Activated B cell treated with CpG ODN at 0.5 μM for 24 hours (primary cell): ENCODE measurements at regions of chr3 and their contacts with region 1.

Region 1: DNA sequence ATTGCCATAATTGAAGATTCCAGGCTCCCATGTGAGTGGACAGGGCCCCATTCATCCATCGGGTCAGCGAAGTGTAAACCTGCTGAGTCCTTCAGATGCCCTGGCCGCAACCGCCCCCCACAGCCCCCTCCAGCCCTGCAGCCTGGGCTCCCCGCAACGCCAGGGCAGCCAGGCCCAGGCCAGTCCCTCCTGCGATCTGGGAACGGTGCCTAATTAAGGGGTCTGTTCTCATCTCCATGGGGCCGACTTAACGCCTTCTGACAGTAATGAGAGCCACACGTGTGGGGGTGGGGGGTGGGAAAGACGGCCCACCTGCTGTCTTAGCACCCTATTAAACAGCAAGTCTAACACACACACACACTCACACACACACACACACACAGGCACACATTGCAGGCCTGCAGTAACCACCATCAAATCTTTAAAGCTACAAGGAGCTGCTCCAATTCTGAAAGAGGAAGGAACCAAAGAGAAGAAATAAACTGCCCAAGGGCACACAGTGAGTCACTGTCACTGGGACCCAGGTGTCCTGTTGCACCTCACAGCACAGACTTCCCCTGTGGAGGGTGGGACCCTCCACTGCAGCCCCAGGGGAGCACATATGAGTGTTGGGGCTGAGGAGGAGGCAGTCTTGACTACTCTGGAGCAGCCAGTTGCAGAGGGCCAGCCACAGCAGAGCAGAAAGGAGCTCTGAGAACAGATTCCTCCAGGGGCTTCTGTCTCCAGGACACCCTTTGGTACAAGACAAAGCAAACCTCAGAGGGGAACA is 31.8 kb upstream of the HES1 start:
- DNase-seq: peak; percentile 75
- ATAC-seq: peak; percentile 87
- H3K4me3 Mint-ChIP-seq: peak overlapping the region; percentile 75
- H3K27ac Mint-ChIP-seq: peak overlapping the region; percentile 87
- H3K4me1 Mint-ChIP-seq: peaks cover 95% of the 10 kb centered on the region
- H3K27me3 Mint-ChIP-seq: no peaks in the 10 kb centered on the region
- CTCF ChIP-seq: no peak

Region 2: DNA sequence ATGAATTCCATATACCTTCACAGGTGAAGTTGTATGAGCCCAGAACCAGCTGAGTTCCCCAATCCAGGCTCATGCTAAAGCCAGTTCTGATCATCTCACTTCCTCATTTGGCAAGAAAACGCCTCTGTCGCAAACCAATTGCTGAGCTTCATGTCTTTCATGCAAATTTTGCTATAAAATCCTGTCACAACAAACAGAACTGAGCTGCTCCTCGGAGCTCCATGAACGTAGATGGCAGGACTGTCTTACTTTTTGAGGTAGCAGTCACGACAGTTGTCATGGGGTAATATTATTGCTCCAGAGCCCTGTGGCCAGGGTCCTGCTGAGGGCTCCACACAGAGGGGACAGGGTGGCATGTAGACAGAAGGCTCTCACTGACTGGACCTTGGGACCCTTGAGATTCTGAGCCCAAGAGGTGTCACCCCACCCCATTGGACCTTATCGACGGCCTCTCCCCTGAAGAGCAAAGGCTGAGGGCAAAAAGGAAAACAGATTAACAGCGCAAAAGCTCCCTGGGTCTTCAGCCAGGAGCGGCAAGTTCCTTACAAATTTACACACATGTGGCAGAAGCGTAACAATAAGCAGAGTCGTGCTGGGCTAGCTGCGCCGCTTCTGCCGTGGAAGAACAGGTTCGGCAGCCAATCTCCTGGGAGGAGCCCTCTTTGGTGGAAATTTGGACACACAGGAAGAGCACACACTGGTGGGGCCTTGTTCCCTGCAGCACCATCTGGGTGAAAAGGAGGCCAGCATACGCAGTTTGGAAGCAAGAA is 262.0 kb before region 1 on chr3:
- CTCF ChIA-PET with region 1: interaction called, 4 read pairs
- POLR2A ChIA-PET with region 1: interaction called, 6 read pairs
- intact Hi-C with region 1: loop called (anchors 1 kb)
- DNase-seq: peak; percentile 24
- ATAC-seq: peak; percentile 91
- H3K4me3 Mint-ChIP-seq: peak overlapping the region; percentile 72
- H3K27ac Mint-ChIP-seq: peak overlapping the region; percentile 81
- H3K4me1 Mint-ChIP-seq: peaks cover 42% of the 10 kb centered on the region
- H3K27me3 Mint-ChIP-seq: peaks cover 2% of the 10 kb centered on the region
- CTCF ChIP-seq: no peak

Region 3: DNA sequence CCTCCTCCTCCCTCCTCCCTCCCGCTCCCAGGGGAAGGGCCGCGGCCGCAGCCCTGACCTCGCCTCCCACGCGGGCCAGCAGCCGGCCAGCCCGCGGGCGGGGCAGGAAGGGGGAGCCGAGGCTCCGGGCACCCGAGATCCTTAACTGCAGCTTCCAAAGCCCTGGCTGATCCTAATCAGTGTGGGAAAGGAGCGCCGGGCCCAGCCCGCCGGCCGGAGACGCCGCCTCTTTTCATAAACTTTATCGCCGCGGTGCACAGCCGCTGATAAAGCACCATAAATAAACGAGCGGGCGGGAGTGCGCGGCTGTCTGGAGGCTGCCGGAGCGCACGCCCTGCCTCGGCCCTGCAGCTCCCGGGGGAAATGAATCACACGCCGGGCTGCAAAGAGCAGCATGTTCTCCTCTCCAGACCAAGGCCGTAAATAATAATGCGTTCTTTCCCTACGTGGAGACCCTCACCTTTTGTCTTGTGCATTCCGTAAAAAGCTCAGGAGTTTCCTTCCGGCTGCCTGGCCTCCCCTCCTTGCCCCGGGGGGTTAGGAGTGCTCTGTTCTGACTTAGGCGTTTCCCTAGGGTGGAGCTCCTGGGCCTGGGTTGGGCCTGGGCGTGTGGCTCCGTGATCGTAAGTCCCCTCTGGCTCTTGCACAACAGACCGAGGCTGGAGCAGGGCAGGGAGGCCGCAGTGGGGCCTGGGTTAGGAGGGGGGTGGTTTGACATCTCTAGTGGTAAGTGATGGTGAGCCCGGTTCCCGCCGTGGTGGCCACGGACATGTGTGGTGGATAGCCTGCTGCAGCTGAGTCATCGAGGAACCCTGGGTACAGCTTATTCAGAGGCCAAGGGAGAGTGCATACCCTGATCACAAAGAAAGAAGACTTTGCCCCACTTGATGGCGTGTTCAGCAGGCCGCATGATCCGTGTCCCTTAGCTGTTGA is 100.8 kb before region 1 on chr3:
- CTCF ChIA-PET with region 1: interaction called, 4 read pairs
- POLR2A ChIA-PET with region 1: interaction called, 20 read pairs
- intact Hi-C with region 1: loop called (anchors 1 kb)
- DNase-seq: peak; percentile 70
- ATAC-seq: peak; percentile 94
- H3K4me3 Mint-ChIP-seq: peak overlapping the region; percentile 76
- H3K27ac Mint-ChIP-seq: peak overlapping the region; percentile 65
- H3K4me1 Mint-ChIP-seq: peaks cover 40% of the 10 kb centered on the region
- H3K27me3 Mint-ChIP-seq: peaks cover 6% of the 10 kb centered on the region
- CTCF ChIP-seq: no peak

Region 4: DNA sequence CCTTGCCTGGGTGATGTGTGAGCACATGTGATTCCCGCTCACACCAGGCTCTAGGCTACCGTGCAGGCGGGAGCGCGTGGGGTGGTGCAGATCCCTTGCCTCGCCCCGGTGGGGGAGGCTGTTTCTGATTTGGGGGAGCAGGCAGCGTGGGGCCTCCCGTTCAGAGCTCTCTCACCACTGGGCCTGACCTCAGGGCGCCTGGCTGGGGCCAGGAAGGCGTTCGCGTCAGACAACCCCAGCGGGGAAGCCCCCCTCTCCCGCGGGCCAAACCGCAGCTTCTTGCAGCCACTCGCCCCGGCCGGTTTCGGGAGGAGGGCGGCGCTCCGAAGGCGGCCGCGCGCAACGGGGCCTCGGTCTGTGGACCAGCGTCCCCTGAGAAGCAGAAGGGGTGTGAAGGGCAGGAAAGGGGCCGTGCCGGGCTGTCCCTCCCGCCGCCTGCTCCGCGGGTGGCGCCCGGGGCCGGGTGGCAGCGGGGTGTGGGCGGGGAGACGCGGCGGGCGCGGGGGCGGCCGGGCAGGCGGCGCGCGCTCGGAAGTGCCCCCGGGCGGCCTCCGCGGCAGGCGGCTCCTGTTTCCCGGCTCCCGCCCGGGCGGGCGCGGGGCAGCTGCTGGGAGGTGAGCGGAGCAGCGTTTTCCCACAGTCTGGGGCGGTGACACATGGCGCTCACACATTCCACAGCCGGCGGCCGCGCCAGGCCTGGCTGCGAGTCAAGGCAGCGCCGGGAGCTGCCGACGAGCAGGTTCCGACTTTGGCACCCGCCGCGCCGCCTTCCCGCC is 33.3 kb before region 1 on chr3:
- CTCF ChIA-PET with region 1: interaction called, 9 read pairs
- POLR2A ChIA-PET with region 1: interaction called, 121 read pairs
- intact Hi-C with region 1: loop called (anchors 1 kb)
- DNase-seq: peak; percentile 93
- ATAC-seq: peak; percentile 93
- H3K4me3 Mint-ChIP-seq: peak overlapping the region; percentile 76
- H3K27ac Mint-ChIP-seq: peak overlapping the region; percentile 84
- H3K4me1 Mint-ChIP-seq: peaks cover 41% of the 10 kb centered on the region
- H3K27me3 Mint-ChIP-seq: no peaks in the 10 kb centered on the region
- CTCF ChIP-seq: no peak

Region 5: DNA sequence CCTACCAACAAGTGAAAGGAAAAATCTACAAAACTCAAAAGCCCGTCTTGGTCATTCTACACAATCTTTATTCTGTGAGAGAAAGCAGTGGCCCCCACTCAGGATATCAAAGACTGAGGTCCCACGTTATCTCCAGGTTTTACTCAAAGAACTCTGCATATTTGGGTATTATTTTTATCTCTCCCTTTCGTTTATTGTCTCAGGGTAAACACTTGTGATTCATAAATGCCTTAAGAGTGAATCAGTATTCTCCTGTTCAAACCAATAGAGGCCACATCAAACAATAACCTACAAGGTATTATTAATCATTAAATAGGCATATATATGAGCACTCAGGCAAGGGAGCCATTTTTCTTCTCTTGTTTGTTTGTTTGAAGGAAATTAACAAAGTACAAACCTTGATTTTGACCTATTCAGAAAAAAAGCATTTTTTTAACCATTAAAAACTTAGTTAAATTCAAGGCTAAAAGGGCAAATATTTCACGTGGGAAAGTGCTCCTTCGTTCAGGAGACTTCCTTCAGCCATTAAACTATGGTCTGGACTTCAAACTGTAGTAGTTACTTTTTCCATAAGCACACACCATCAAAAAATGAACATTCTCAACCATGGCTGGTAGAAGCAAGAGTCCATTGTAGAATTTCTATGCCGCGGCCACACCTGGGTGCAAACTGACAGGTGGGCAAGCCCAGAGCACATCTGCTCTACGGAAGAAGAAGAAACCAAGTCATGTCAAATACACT is 17.9 kb after region 1 on chr3:
- CTCF ChIA-PET with region 1: interaction called, 3 read pairs
- POLR2A ChIA-PET with region 1: interaction called, 465 read pairs
- intact Hi-C with region 1: loop called (anchors 1 kb)
- DNase-seq: no peak
- ATAC-seq: no peak
- H3K4me3 Mint-ChIP-seq: no peak overlapping the region
- H3K27ac Mint-ChIP-seq: no peak overlapping the region
- H3K4me1 Mint-ChIP-seq: peaks cover 29% of the 10 kb centered on the region
- H3K27me3 Mint-ChIP-seq: no peaks in the 10 kb centered on the region
- CTCF ChIP-seq: no peak

Region 6: DNA sequence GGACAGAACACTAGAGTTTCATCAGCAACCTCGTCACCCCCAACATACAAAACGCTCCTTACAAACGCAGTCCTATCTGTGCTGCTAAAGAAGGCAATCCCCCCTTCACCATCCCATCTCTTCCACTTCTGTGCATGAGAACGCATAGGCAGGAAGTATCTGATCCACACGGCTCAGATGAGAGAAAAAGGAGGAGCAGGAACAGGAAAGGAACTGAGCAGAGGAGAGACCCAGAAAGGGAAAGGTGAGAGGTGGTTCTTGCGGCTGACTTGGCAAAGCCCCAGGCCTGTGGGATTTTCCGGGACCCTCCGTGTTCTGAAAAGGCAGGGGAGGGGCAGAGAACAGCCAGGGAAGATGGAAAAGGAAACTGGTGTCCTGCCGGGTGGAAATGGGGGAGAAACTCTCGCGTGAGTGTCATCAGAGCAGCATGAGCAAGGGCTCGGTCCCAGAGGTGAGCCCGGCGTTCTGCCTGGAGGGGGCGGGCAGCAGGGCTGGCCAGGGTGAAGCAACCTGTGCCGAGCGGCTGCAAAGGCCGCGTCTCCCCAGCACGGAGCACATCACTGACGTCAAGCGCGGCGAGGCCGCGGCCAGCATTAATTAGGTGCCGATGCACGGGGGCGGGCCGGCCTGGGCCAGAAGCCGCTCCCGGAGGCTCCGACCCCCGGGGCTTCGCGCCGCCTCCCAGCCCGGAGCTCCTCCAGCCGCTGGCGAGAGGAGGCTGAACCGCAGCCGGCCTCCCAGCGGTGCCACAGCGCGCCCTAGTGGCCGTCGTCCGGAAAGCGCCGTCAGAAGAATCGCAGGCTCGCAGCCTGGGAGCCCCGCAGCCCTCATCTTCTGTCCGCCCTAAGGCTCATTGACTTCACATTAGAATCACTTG is 211.2 kb after region 1 on chr3:
- CTCF ChIA-PET with region 1: interaction called, 4 read pairs
- POLR2A ChIA-PET with region 1: interaction called, 8 read pairs
- intact Hi-C with region 1: loop called (anchors 2 kb)
- DNase-seq: peak; percentile 86
- ATAC-seq: peak; percentile 88
- H3K4me3 Mint-ChIP-seq: peak overlapping the region; percentile 77
- H3K27ac Mint-ChIP-seq: no peak overlapping the region
- H3K4me1 Mint-ChIP-seq: peaks cover 28% of the 10 kb centered on the region
- H3K27me3 Mint-ChIP-seq: peaks cover 25% of the 10 kb centered on the region
- CTCF ChIP-seq: peak; percentile 96

Region 7: DNA sequence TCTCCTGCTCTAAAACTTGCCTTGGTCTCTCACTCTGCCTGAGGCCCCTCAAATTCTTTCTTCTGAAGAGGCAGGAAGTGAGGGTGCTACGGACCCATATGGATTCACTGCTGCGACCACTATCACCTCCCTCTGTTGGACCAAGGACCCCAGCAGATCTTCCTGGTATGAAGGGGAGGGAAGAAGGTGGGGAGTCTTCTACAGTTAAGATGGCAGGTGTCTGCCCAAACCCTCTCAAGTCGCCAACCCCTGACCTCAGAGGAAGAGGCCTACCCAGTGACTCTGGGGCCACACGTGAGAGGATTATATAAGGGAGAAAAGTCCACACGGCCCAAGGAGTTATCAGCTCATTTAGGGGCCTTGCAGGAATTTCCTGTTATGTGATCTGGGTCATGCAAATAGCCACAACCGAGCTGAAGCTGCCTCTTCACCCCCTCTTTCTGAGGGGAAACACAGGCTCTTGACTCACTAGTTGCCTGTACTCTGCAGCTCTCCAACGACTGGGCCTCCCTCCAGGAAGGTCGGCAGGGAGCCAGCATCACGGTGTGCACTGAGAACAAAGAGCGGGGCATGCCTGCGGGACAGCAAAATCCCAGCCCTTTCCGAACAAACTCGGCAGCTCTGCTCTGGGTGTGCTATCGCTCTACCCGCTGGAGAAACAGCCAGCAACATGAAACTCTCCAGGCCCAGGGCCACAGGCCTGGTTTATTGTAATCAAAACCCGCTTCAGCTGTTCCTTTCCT is 1050.8 kb after region 1 on chr3:
- CTCF ChIA-PET with region 1: no interaction called
- POLR2A ChIA-PET with region 1: no interaction called
- intact Hi-C with region 1: loop called (anchors 10 kb)
- DNase-seq: no peak
- ATAC-seq: peak; percentile 40
- H3K4me3 Mint-ChIP-seq: peak overlapping the region; percentile 53
- H3K27ac Mint-ChIP-seq: peak overlapping the region; percentile 90
- H3K4me1 Mint-ChIP-seq: peaks cover 90% of the 10 kb centered on the region
- H3K27me3 Mint-ChIP-seq: no peaks in the 10 kb centered on the region
- CTCF ChIP-seq: no peak

Region 8: DNA sequence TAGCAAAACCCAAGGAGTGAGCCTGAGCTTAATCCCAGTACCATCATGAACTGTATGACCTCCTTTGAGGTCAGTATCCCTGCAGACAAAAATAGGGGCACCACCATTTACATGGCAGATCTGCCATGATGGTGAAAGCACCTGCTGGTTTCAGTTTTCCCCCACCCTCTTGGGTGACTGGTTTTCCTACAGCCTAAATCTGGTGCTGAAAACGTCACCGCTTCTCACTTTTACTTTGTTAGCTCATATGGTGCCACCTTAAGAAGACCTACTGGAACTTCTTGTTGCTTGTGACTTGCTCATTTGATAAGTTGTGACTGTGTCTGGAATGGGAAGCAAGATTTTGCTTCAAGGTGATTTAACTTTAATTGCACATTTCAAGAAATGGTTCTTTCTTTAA is 1433.8 kb after region 1 on chr3:
- CTCF ChIA-PET with region 1: no interaction called
- POLR2A ChIA-PET with region 1: no interaction called
- intact Hi-C with region 1: no loop called
- DNase-seq: no peak
- ATAC-seq: peak; percentile 46
- H3K4me3 Mint-ChIP-seq: peak overlapping the region; percentile 56
- H3K27ac Mint-ChIP-seq: peak overlapping the region; percentile 78
- H3K4me1 Mint-ChIP-seq: peaks cover 87% of the 10 kb centered on the region
- H3K27me3 Mint-ChIP-seq: no peaks in the 10 kb centered on the region
- CTCF ChIP-seq: no peak